GM12878 (cell line): ENCODE measurements at regions of chr5 and their contacts with region 1.

Region 1: GRCh38 chr5:159083548-159084452 is 15.9 kb downstream of the EBF1 start:
- DNase-seq: no peak
- ATAC-seq: peak; percentile 85
- H3K4me3 ChIP-seq: no peak overlapping the region
- H3K27ac ChIP-seq: no peak overlapping the region
- H3K4me1 ChIP-seq: peaks cover 7% of the 10 kb centered on the region; the same call in 1 of the 2 replicates
- H3K27me3 ChIP-seq: no peaks in the 10 kb centered on the region
- CTCF ChIP-seq: no peak
- EP300 ChIP-seq: peak; percentile 90 to 92; a peak in 3 of 4 replicates
- POLR2A ChIP-seq: no peak
- RAD21 ChIP-seq: no peak

Region 2: GRCh38 chr5:159061179-159061796 is 22.5 kb before region 1 on chr5:
- CTCF ChIA-PET with region 1: interaction called, 4 read pairs
- POLR2A ChIA-PET with region 1: interaction called, 7 read pairs
- RAD21 ChIA-PET with region 1: interaction called, 8 read pairs
- SMC1A ChIA-PET with region 1: interaction called, 5 read pairs
- in situ Hi-C with region 1: no loop called
- intact Hi-C with region 1: loop called (anchors 2 kb)
- DNase-seq: no peak
- ATAC-seq: peak; percentile 39
- H3K4me3 ChIP-seq: no peak overlapping the region
- H3K27ac ChIP-seq: no peak overlapping the region
- H3K4me1 ChIP-seq: peaks cover 12% of the 10 kb centered on the region; the same call in 1 of the 2 replicates
- H3K27me3 ChIP-seq: no peaks in the 10 kb centered on the region
- CTCF ChIP-seq: no peak
- EP300 ChIP-seq: no peak
- POLR2A ChIP-seq: no peak
- RAD21 ChIP-seq: no peak

Region 3: GRCh38 chr5:159073026-159073425 is 10.8 kb before region 1 on chr5:
- CTCF ChIA-PET with region 1: no interaction called
- POLR2A ChIA-PET with region 1: no interaction called
- RAD21 ChIA-PET with region 1: interaction called, 4 read pairs
- SMC1A ChIA-PET with region 1: interaction called, 22 read pairs
- in situ Hi-C with region 1: no loop called
- intact Hi-C with region 1: no loop called
- DNase-seq: no peak
- ATAC-seq: no peak
- H3K4me3 ChIP-seq: no peak overlapping the region
- H3K27ac ChIP-seq: no peak overlapping the region
- H3K4me1 ChIP-seq: no peaks in the 10 kb centered on the region
- H3K27me3 ChIP-seq: no peaks in the 10 kb centered on the region
- CTCF ChIP-seq: no peak
- EP300 ChIP-seq: no peak
- POLR2A ChIP-seq: no peak
- RAD21 ChIP-seq: no peak

Region 4: GRCh38 chr5:159094745-159095144 is 10.9 kb after region 1 on chr5:
- CTCF ChIA-PET with region 1: interaction called, 6 read pairs
- POLR2A ChIA-PET with region 1: interaction called, 3 read pairs
- RAD21 ChIA-PET with region 1: interaction called, 11 read pairs
- SMC1A ChIA-PET with region 1: interaction called, 20 read pairs
- in situ Hi-C with region 1: no loop called
- intact Hi-C with region 1: no loop called
- DNase-seq: no peak
- ATAC-seq: peak; percentile 35
- H3K4me3 ChIP-seq: peak overlapping the region; percentile 88
- H3K27ac ChIP-seq: peak overlapping the region; percentile 68
- H3K4me1 ChIP-seq: peaks cover 5% of the 10 kb centered on the region; the same call in 1 of the 2 replicates
- H3K27me3 ChIP-seq: no peaks in the 10 kb centered on the region
- CTCF ChIP-seq: no peak
- EP300 ChIP-seq: no peak
- POLR2A ChIP-seq: no peak
- RAD21 ChIP-seq: no peak